Gastrocnemius medialis (tissue), 4 donors: ENCODE measurements at regions of chr4 and their contacts with region 1.

Region 1: GRCh38 chr4:83503974-83504373 is 19.1 kb upstream of the ABRAXAS1 start:
- DNase-seq: no peak
- ATAC-seq: no peak
- H3K4me3 ChIP-seq: no peak overlapping the region
- H3K27ac ChIP-seq: no peak overlapping the region
- H3K4me1 ChIP-seq: no peaks in the 10 kb centered on the region
- H3K27me3 ChIP-seq: no peaks in the 10 kb centered on the region
- CTCF ChIP-seq: no peak
- POLR2A ChIP-seq: no peak

Region 2: DNA sequence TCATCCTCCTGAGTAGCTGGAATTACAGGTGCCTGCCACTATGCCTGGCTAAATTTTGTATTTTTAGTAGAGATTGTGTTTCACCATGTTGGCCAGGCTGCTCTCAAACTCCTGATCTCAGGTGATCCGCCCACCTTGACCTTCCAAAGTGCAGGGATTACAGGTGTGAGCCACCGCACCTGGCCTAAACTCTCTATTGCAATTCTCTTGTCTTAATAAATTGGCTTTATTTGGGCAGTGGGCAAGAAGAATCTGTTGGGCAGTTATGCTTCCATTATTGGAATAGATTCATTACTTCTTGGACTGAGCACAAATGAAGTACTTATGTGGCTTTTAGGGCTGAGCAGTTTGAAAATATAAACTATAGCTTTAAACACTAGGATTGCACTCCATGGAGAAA is 23.7 kb after region 1 on chr4:
- in situ Hi-C with region 1: no loop called
- intact Hi-C with region 1: no loop called
- DNase-seq: no peak
- ATAC-seq: no peak
- H3K4me3 ChIP-seq: no peak overlapping the region
- H3K27ac ChIP-seq: no peak overlapping the region
- H3K4me1 ChIP-seq: no peaks in the 10 kb centered on the region
- H3K27me3 ChIP-seq: no peaks in the 10 kb centered on the region
- CTCF ChIP-seq: no peak
- POLR2A ChIP-seq: no peak

Region 3: GRCh38 chr4:83582289-83582769 is 78.4 kb after region 1 on chr4:
- in situ Hi-C with region 1: no loop called
- intact Hi-C with region 1: loop called (anchors 2 kb)
- DNase-seq: peak; percentile 8 to 30
- ATAC-seq: peak; percentile 76 to 77
- H3K4me3 ChIP-seq: no peak overlapping the region
- H3K27ac ChIP-seq: peak overlapping the region; percentile 21 to 54 (median 39)
- H3K4me1 ChIP-seq: peaks cover 16 to 41% of the 10 kb centered on the region in 2 donors
- H3K27me3 ChIP-seq: no peaks in the 10 kb centered on the region
- CTCF ChIP-seq: peak in 4 of 5 experiments; percentile 21 to 38 (median 34)
- POLR2A ChIP-seq: no peak